ENCODE measurements at regions of chr22 and their contacts with region 1.

Region 1: GRCh38 chr22:29750559-29751538 is 16.0 kb downstream of the ZMAT5 start:
- DNase-seq: no peak
- H3K4me3 ChIP-seq: no peak overlapping the region
- H3K27ac ChIP-seq: no peak overlapping the region
- H3K4me1 ChIP-seq: no peaks in the 10 kb centered on the region
- H3K27me3 ChIP-seq: no peaks in the 10 kb centered on the region
- CTCF ChIP-seq: no peak

Region 2: GRCh38 chr22:29689880-29690213 is 61.0 kb before region 1 on chr22:
- CTCF ChIA-PET with region 1: no interaction called
- POLR2A ChIA-PET with region 1: no interaction called
- intact Hi-C with region 1: no loop called
- DNase-seq: peak in 1 of 2 experiments; percentile 16
- H3K4me3 ChIP-seq: no peak overlapping the region
- H3K27ac ChIP-seq: no peak overlapping the region
- H3K4me1 ChIP-seq: peaks cover 28% of the 10 kb centered on the region
- H3K27me3 ChIP-seq: no peaks in the 10 kb centered on the region
- CTCF ChIP-seq: peak; percentile 60

Region 3: GRCh38 chr22:30074994-30075393 is 324.1 kb after region 1 on chr22:
- CTCF ChIA-PET with region 1: no interaction called
- POLR2A ChIA-PET with region 1: interaction called, 10 read pairs
- intact Hi-C with region 1: no loop called
- DNase-seq: no peak
- H3K4me3 ChIP-seq: no peak overlapping the region
- H3K27ac ChIP-seq: no peak overlapping the region
- H3K4me1 ChIP-seq: no peaks in the 10 kb centered on the region
- H3K27me3 ChIP-seq: no peaks in the 10 kb centered on the region
- CTCF ChIP-seq: no peak